ENCODE measurements at regions of chr3 and their contacts with region 1.

Region 1: DNA sequence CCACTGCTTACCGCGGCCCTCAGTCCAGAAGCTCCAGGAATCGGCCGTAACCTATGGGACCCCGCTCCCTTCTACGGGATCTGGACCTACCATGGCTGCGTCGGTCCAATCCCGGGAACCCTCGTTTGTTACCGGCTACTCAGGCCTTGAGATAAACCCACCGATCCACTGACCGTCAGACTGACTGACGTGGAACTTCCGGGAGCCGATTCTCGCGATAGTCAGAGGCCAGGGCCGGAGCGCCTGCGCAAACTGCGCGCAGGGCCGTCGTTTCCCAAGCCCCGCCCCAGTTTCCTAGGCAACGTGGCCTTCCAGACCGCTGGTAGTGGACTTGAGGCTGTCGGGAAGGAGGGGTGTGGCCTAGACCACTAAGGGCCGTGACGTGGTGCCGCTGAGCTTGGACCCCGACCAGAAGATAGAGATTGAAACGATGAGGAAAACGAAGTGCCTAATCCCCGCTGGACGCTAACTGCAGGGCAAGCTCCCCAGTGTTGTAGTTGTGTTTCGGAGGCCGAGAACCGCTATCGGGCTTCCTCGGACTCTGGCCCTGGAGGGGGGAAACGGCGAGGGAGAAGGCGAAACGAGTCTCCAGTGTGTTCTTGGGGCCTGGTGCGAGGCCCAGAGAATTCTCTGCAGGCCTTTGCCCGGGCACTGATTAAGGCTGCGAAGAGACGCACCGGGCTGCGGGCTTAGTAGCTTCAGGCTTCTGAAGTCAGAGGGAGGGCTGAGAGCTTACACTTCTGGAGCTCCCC is at the start of gene COPB2:
- DNase-seq: peak; percentile 96
- H3K4me3 Mint-ChIP-seq: peak within 1 kb of the TSS; percentile 91
- H3K27ac Mint-ChIP-seq: peak within 1 kb of the TSS; percentile 96
- H3K4me1 Mint-ChIP-seq: peaks cover 52% of the 10 kb centered on the region
- H3K27me3 Mint-ChIP-seq: no peaks in the 10 kb centered on the region
- total RNA-seq, gene COPB2: 96.9 and 103 TPM in 2 replicates

Region 2: DNA sequence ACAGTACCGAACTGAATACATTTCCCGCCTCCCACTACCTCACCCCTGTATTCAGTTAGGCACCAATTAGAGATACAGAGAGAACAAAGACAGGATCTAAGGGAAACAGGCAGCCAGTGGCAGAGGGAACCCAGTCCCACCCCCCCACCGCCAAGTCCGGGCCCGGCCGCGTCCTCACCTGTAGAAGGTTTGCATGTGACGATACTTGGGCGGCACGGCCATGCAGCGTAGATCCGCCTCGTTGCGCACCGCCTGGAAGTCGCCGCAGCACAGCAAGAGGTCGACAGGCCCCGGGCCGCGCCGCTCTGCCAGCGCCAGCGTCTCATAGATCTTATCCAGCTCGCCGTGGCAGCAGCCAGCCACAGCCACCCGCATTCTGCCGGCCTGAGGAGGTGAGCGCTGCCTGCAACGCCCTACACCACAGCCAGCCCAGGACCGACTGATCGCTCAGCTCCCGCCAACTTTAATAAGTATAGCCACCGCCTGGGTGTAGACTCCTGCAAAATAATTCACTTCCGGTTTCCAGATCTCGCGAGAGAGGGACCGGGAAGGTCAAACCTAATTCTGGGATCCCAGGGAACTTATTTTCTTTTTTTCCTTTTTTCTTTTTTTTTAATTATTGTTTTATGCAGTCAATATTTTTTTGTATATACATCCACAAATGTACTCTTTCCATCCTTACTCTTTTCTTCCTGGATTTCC is 1215.1 kb before region 1 on chr3 and contains the start of gene DBR1:
- intact Hi-C with region 1: loop called (anchors 1 kb)
- DNase-seq: peak; percentile 68
- H3K4me3 Mint-ChIP-seq: peak within 1 kb of the TSS; percentile 98
- H3K27ac Mint-ChIP-seq: peak within 1 kb of the TSS; percentile 94
- H3K4me1 Mint-ChIP-seq: peaks cover 42% of the 10 kb centered on the region
- H3K27me3 Mint-ChIP-seq: peaks cover 7% of the 10 kb centered on the region
- total RNA-seq, gene DBR1: 25.7 and 31.0 TPM in 2 replicates

Region 3: GRCh38 chr3:139353920-139354556 is 35.6 kb before region 1 on chr3:
- intact Hi-C with region 1: loop called (anchors 1 kb)
- DNase-seq: no peak
- H3K4me3 Mint-ChIP-seq: no peak overlapping the region
- H3K27ac Mint-ChIP-seq: no peak overlapping the region
- H3K4me1 Mint-ChIP-seq: peaks cover 9% of the 10 kb centered on the region
- H3K27me3 Mint-ChIP-seq: no peaks in the 10 kb centered on the region

Region 4: DNA sequence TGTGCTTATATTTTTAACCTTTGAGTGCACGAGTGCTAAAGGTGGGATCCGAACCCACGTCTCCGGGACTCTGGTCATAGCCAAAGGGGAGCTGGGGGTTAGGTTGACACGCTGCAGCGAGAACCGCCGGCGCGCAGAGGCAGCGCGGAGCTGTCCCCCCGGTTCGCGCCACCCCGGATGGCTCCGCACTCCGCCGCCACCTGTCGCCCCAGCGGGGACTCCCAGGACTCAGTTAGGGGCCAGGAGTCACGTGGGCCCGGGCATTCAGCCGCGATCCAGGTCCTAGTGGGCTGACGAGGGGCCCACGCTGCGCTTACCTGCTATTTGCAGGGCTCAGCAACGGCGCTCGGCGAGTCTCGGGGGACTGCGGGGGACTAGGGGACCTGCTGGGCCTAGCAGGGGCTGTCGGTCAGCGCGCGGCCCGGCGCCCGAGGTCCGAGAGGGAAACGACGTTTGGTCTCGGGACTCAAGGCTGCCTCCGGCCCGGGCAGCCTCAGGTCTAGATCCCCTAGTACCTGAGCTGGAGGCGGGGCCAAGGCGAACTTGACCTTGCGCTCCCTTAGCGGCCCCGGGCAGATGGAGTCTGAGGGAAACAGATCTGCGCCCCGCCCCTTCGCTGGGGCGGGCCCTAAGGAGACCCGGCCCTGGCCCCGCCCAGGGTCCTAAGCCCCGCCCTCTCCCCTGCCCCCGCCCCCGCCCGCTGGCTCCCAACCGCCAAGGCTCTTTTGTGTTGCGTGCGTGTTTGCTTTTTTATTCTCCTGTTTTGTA is 287.9 kb after region 1 on chr3 and contains the start of gene NMNAT3:
- intact Hi-C with region 1: loop called (anchors 1 kb)
- DNase-seq: peak; percentile 73
- H3K4me3 Mint-ChIP-seq: peak within 1 kb of the TSS; percentile 83
- H3K27ac Mint-ChIP-seq: no peak within 1 kb of the TSS
- H3K4me1 Mint-ChIP-seq: no peaks in the 10 kb centered on the region
- H3K27me3 Mint-ChIP-seq: peaks cover 13% of the 10 kb centered on the region
- total RNA-seq, gene NMNAT3: 1.1 and 1.2 TPM in 2 replicates

Region 5: DNA sequence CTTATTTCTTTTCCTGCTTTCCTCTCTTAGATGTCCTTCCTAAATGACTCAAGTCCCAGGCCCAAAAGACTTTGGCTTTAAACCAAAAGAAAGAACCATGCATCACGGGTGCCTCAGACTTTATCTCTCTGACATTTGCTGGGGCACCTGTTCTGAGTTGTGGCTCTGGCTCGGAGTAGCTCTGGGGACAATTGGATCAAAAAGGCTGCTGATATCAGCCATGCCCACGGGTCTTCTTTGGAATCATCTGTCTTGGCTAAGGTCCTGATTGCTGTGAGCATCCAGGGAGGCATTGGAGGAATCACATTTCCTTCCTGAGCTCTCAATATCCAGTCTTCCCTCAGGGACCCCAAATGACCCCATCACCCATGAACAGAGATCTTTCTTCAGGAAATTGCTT is 605.3 kb after region 1 on chr3:
- intact Hi-C with region 1: no loop called
- DNase-seq: no peak
- H3K4me3 Mint-ChIP-seq: no peak overlapping the region
- H3K27ac Mint-ChIP-seq: no peak overlapping the region
- H3K4me1 Mint-ChIP-seq: no peaks in the 10 kb centered on the region
- H3K27me3 Mint-ChIP-seq: no peaks in the 10 kb centered on the region

Region 6: GRCh38 chr3:140941434-140942220 is 1552.0 kb after region 1 on chr3 and contains the start of gene SLC25A36:
- intact Hi-C with region 1: loop called (anchors 10 kb)
- DNase-seq: peak; percentile 95
- H3K4me3 Mint-ChIP-seq: peak within 1 kb of the TSS; percentile 92
- H3K27ac Mint-ChIP-seq: peak within 1 kb of the TSS; percentile 95
- H3K4me1 Mint-ChIP-seq: peaks cover 36% of the 10 kb centered on the region
- H3K27me3 Mint-ChIP-seq: peaks cover 12% of the 10 kb centered on the region
- total RNA-seq, gene SLC25A36: 49.5 and 52.3 TPM in 2 replicates

Measured in activated T-helper 1 cell treated with anti-CD3 and anti-CD28 coated beads, Interleukin-12 subunit alpha, Interleukin-12 subunit beta, Interleukin-2, Interleukin-4 antibody, amounts not matched to agents 30 ng/mL and 10 ng/mL and 1 ng/mL, durations not matched to agents 14 hours and 24 hours and 36 hours (primary cell).